Heart right ventricle (tissue), 16 donors: ENCODE measurements at regions of chr11 and their contacts with region 1.

Region 1: DNA sequence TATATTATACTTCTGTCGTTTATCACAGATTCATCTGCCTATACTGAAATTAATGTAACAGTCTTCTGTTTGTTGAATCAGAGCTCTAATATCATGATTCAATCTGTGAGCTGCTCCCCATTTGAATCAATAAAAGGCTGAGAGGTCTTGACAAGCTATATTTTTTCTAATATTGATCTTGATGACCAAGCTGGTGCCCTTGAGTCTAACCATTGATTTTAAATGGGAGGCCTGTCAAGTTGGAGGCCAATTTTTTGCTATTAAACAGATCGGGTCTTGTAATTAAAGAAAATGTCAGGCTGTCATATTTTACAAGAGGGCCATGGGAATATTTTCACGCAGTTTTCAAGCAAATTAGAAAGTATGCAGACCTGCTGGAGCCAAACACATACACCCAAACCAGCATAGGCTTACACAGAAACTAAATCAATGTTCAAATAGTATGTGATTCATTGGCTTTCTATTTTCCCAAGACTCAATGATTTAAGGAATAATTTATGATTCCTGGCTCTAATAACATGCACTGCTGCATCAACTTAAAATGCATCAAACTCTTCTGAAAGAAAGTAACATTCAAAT is 286.9 kb downstream of the CNTN5 start:
- DNase-seq: no peak
- ATAC-seq: no peak
- H3K4me3 ChIP-seq: no peak overlapping the region
- H3K27ac ChIP-seq: no peak overlapping the region
- H3K4me1 ChIP-seq: no peaks in the 10 kb centered on the region
- H3K27me3 ChIP-seq: no peaks in the 10 kb centered on the region
- CTCF ChIP-seq: no peak

Region 2: GRCh38 chr11:99208813-99209212 is 98.8 kb before region 1 on chr11:
- intact Hi-C with region 1: no loop called
- DNase-seq: no peak
- ATAC-seq: no peak
- H3K4me3 ChIP-seq: no peak overlapping the region
- H3K27ac ChIP-seq: no peak overlapping the region
- H3K4me1 ChIP-seq: no peaks in the 10 kb centered on the region
- H3K27me3 ChIP-seq: no peaks in the 10 kb centered on the region
- CTCF ChIP-seq: no peak

Region 3: DNA sequence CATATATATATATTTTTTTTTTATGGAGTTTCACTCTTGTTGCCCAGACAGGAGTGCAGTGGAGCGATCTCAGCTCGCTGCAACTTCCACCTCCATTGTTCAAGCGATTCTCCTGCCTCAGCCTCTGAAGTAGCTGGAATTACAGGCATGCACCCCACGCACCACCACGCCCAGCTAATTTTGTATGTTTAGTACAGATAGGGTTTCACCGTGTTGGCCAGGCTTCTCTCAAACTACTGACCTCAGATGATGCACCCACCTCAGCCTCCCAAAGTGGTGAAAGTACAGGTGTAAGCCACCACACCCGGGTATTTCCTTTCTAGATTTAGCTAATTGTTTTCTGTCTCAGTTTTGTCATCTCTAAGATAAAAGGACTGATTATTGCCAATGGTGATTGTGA is 534.3 kb after region 1 on chr11:
- intact Hi-C with region 1: loop called in 1 of 10 experiments (anchors 10 kb)
- DNase-seq: no peak
- ATAC-seq: no peak
- H3K4me3 ChIP-seq: no peak overlapping the region
- H3K27ac ChIP-seq: no peak overlapping the region
- H3K4me1 ChIP-seq: no peaks in the 10 kb centered on the region
- H3K27me3 ChIP-seq: no peaks in the 10 kb centered on the region
- CTCF ChIP-seq: no peak